ENCODE measurements at regions of chr16 and their contacts with region 1.

Region 1: GRCh38 chr16:3150346-3151218 is 15.8 kb downstream of the ZNF213 start:
- DNase-seq: peak; percentile 95
- ATAC-seq: peak; percentile 87
- H3K4me3 Mint-ChIP-seq: peak overlapping the region; percentile 88
- H3K27ac Mint-ChIP-seq: peak overlapping the region; percentile 91
- H3K4me1 Mint-ChIP-seq: peaks cover 25% of the 10 kb centered on the region
- H3K27me3 Mint-ChIP-seq: no peaks in the 10 kb centered on the region
- CTCF ChIP-seq: no peak

Region 2: GRCh38 chr16:3106205-3106928 is 44.2 kb before region 1 on chr16:
- CTCF ChIA-PET with region 1: no interaction called
- POLR2A ChIA-PET with region 1: interaction called, 10 read pairs
- intact Hi-C with region 1: no loop called
- DNase-seq: peak; percentile 84
- ATAC-seq: peak; percentile 96
- H3K4me3 Mint-ChIP-seq: peak overlapping the region; percentile 79
- H3K27ac Mint-ChIP-seq: peak overlapping the region; percentile 73
- H3K4me1 Mint-ChIP-seq: peaks cover 27% of the 10 kb centered on the region
- H3K27me3 Mint-ChIP-seq: peaks cover 1% of the 10 kb centered on the region
- CTCF ChIP-seq: no peak

Region 3: GRCh38 chr16:3129137-3130131 is 21.1 kb before region 1 on chr16:
- CTCF ChIA-PET with region 1: interaction called, 11 read pairs
- POLR2A ChIA-PET with region 1: interaction called, 59 read pairs
- intact Hi-C with region 1: loop called (anchors 1 kb)
- DNase-seq: peak; percentile 55
- ATAC-seq: peak; percentile 71
- H3K4me3 Mint-ChIP-seq: peak overlapping the region; percentile 92
- H3K27ac Mint-ChIP-seq: peak overlapping the region; percentile 89
- H3K4me1 Mint-ChIP-seq: peaks cover 43% of the 10 kb centered on the region
- H3K27me3 Mint-ChIP-seq: no peaks in the 10 kb centered on the region
- CTCF ChIP-seq: peak; percentile 95

Region 4: DNA sequence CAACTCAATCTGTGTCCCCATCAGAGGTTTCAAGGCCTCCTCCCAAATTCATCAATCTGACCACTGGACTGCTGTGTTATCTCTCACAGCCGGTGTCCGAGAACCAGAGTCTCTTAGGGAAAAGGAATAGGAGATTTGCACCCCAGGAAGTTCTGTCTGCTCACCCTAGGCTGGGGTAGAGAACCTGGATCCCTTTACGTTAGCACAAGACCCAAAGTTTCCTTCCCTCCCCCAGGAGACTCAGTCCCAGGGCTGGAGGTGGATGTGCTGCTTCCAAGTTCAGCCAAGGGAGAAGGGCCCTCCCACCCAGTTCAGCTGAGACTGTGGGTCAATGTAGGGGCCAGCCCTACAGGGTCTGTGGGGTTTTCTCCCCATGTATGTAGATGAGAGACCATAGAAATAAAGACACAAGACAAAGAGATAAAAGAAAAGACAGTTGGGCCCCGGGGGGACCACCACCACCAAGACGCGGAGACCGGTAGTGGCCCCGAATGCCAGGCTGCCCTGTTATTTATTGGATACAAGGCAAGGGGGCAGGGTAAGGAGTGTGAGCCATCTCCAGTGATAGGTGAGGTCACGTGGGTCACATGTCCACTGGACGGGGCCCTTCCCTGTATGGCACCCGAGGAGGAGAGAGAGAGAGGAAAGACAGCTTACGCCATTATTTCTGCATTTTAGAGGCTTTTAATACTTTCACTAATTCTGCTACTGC is 14.7 kb after region 1 on chr16:
- CTCF ChIA-PET with region 1: interaction called, 6 read pairs
- POLR2A ChIA-PET with region 1: interaction called, 26 read pairs
- intact Hi-C with region 1: loop called (anchors 1 kb)
- DNase-seq: no peak
- ATAC-seq: no peak
- H3K4me3 Mint-ChIP-seq: peak overlapping the region; percentile 57
- H3K27ac Mint-ChIP-seq: peak overlapping the region; percentile 53
- H3K4me1 Mint-ChIP-seq: peaks cover 12% of the 10 kb centered on the region
- H3K27me3 Mint-ChIP-seq: peaks cover 10% of the 10 kb centered on the region
- CTCF ChIP-seq: no peak

Region 5: DNA sequence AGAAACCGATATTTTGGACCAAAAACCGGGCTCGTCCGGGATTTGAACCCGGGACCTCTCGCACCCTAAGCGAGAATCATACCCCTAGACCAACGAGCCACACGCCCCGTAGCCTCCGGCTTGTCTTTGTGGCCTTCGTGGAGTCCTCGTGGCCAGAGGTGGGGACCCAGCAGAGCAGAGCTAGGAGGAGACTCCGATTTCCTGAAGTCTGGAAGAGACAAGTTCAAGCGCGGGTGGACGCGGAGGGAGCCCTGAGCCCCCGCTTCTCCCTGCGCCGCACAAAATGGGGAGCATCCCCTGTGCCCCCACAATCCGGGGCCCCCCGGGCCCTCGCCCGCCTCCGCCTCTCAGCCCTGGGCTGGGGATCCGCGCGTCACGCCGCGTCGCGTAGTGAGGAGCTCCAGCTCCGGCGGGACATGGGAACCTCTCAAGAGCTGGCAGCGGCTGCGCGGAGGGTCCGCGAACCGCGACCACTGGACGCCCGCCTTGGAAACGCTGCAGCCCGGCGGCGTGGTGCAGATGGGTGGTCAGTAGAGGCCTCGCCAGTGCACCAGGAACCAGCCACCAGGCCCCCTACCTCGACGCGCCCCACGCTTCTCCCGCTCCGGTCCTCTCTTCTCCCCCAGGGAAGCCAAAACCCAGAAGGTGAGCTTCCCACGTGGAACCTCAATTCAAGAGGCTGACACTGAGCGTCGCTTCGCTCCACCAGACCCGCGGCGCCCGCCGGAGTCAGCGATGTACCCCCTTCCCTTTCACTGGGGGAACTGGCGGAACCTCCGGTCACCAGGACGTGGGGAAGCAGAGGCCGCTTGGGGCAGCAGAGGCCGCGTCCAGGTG is 32.2 kb after region 1 on chr16:
- CTCF ChIA-PET with region 1: interaction called, 3 read pairs
- POLR2A ChIA-PET with region 1: interaction called, 8 read pairs
- intact Hi-C with region 1: loop called (anchors 2 kb)
- DNase-seq: no peak
- ATAC-seq: peak; percentile 40
- H3K4me3 Mint-ChIP-seq: peak overlapping the region; percentile 62
- H3K27ac Mint-ChIP-seq: peak overlapping the region; percentile 63
- H3K4me1 Mint-ChIP-seq: peaks cover 21% of the 10 kb centered on the region
- H3K27me3 Mint-ChIP-seq: peaks cover 71% of the 10 kb centered on the region
- CTCF ChIP-seq: no peak

Region 6: GRCh38 chr16:3264137-3265036 is 113.8 kb after region 1 on chr16:
- CTCF ChIA-PET with region 1: no interaction called
- POLR2A ChIA-PET with region 1: interaction called, 5 read pairs
- intact Hi-C with region 1: loop called (anchors 10 kb)
- DNase-seq: peak; percentile 95
- ATAC-seq: peak; percentile 89
- H3K4me3 Mint-ChIP-seq: peak overlapping the region; percentile 89
- H3K27ac Mint-ChIP-seq: peak overlapping the region; percentile 95
- H3K4me1 Mint-ChIP-seq: peaks cover 27% of the 10 kb centered on the region
- H3K27me3 Mint-ChIP-seq: no peaks in the 10 kb centered on the region
- CTCF ChIP-seq: no peak

Region 7: GRCh38 chr16:3611146-3611975 is 460.8 kb after region 1 on chr16 and contains the start of gene SLX4:
- CTCF ChIA-PET with region 1: no interaction called
- POLR2A ChIA-PET with region 1: no interaction called
- intact Hi-C with region 1: loop called (anchors 10 kb)
- DNase-seq: peak; percentile 95
- ATAC-seq: peak; percentile 85
- H3K4me3 Mint-ChIP-seq: peak within 1 kb of the TSS; percentile 100
- H3K27ac Mint-ChIP-seq: peak within 1 kb of the TSS; percentile 96
- H3K4me1 Mint-ChIP-seq: peaks cover 60% of the 10 kb centered on the region
- H3K27me3 Mint-ChIP-seq: no peaks in the 10 kb centered on the region
- CTCF ChIP-seq: no peak
- total RNA-seq, gene SLX4: 11.4 and 13.0 TPM in 2 replicates